SK-N-SH (cell line): ENCODE measurements at regions of chr7 and their contacts with region 1.

Region 1: DNA sequence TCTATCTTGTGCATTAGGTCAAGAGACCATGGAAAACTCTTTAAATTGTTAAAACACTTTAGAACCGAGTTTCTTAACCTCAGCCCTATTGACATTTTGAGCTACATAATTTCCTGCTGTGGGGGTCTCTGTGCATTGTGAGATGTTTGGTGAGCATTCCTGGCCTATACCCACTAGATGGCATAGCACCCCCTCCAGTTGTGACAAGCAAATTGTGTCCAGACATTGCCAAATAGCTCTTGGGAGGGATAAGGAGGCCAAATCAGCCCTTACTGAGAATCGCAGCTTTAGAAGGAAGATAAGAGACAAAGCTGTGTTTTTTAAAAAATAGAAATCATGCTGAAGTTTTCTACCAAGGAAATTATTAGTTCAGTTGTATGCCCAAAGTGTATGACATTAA is 1158.5 kb upstream of the C7orf33 start:
- DNase-seq: peak; percentile 61
- H3K4me3 ChIP-seq: no peak overlapping the region
- H3K27ac ChIP-seq: peak overlapping the region; percentile 20 to 23; a peak in 3 of 4 replicates
- H3K4me1 ChIP-seq: peaks cover 8 to 9% of the 10 kb centered on the region in 2 experiments; a peak in 3 of 4 replicates
- H3K27me3 ChIP-seq: no peaks in the 10 kb centered on the region
- CTCF ChIP-seq: peak; percentile 85
- EP300 ChIP-seq: 0 out of 4 replicates have a peak, but pooled peaks of 1 of the 2 experiments have one; percentile 11
- RAD21 ChIP-seq: peak; percentile 98

Region 2: DNA sequence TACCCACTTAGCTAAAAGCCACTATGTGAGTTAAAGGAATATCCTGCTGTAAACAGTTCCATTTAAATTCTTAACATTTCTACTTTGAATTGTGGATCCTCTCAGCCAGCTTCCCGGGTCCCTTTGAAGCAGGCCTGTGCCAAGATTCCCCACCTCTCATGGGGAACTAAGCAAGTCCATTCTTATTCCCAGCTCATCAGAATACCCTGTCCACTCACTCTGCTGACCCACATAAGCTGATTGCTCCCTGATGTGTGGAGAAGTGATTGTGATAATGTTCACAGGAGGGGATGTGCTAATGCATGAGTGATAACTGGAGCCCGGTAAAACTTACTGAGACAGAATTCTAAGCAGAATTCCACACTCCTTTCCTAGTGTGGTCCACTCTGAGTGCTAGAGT is 605.8 kb before region 1 on chr7:
- CTCF ChIA-PET with region 1: no interaction called
- POLR2A ChIA-PET with region 1: no interaction called
- DNase-seq: peak; percentile 19
- H3K4me3 ChIP-seq: no peak overlapping the region
- H3K27ac ChIP-seq: peak overlapping the region in 1 of 2 experiments; percentile 68; a peak in 2 of 4 replicates
- H3K4me1 ChIP-seq: peaks cover 0 to 36% of the 10 kb centered on the region in 2 experiments; a peak in 2 of 4 replicates
- H3K27me3 ChIP-seq: no peaks in the 10 kb centered on the region
- CTCF ChIP-seq: no peak
- EP300 ChIP-seq: peak in 1 of 2 experiments; percentile 31; a peak in 1 of 4 replicates
- RAD21 ChIP-seq: no peak; the same call in 1 of the 2 replicates

Region 3: DNA sequence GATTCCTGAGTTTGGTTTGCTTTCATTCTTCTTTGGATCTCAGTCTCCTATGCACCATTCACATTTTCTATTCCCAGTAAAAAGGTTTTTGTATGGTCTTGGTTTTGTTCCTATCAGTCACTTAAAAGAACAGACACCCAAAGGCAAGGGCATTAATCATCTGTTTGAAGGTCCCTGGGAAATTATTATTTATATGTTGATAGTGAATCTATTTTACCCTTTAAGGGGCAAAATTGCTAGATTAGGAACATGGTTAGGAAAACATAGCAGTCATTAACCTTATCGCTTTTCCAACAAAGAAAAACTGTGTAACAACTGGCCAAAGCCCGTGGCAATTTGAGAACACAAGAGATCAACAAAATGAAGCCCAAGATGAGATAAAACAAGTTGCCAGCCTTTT is 11.9 kb after region 1 on chr7:
- CTCF ChIA-PET with region 1: interaction called, 16 read pairs
- POLR2A ChIA-PET with region 1: no interaction called
- DNase-seq: peak; percentile 63
- H3K4me3 ChIP-seq: no peak overlapping the region
- H3K27ac ChIP-seq: peak overlapping the region in 1 of 2 experiments; percentile 99; a peak in 3 of 4 replicates
- H3K4me1 ChIP-seq: peaks cover 0 to 14% of the 10 kb centered on the region in 2 experiments; a peak in 2 of 4 replicates
- H3K27me3 ChIP-seq: no peaks in the 10 kb centered on the region
- CTCF ChIP-seq: no peak
- EP300 ChIP-seq: peak; percentile 39 to 100; a peak in 3 of 4 replicates
- RAD21 ChIP-seq: 0 out of 2 replicates have a peak, but pooled peaks have one; percentile 50

Region 4: GRCh38 chr7:147452816-147453215 is 20.7 kb after region 1 on chr7:
- CTCF ChIA-PET with region 1: interaction called, 10 read pairs
- POLR2A ChIA-PET with region 1: no interaction called
- DNase-seq: no peak
- H3K4me3 ChIP-seq: no peak overlapping the region
- H3K27ac ChIP-seq: no peak overlapping the region
- H3K4me1 ChIP-seq: no peaks in the 10 kb centered on the region
- H3K27me3 ChIP-seq: no peaks in the 10 kb centered on the region
- CTCF ChIP-seq: no peak
- EP300 ChIP-seq: no peak
- RAD21 ChIP-seq: no peak

Region 5: DNA sequence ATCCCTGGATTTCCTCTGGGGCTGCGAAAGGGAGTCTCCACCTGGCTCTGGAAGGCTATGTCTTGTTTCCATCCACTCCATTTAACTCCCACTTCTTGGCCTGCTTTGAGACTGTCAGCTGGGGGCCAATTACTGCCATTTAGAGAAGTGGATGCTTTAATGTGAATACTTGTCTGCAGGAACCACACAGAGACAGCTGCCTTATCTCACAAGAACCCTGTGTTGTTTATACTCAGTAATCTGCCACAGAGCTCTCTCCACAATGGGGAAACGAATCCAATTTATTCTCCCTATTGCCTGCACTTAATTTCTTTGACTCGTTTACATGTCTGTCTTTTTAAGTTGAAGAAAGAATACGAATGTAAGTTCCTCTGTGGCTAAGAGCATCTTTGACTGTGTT is 371.5 kb after region 1 on chr7:
- CTCF ChIA-PET with region 1: interaction called, 28 read pairs
- POLR2A ChIA-PET with region 1: no interaction called
- DNase-seq: peak; percentile 73
- H3K4me3 ChIP-seq: no peak overlapping the region
- H3K27ac ChIP-seq: peak overlapping the region in 1 of 2 experiments; percentile 93; a peak in 3 of 4 replicates
- H3K4me1 ChIP-seq: peaks cover 0 to 6% of the 10 kb centered on the region in 2 experiments; a peak in 2 of 4 replicates
- H3K27me3 ChIP-seq: no peaks in the 10 kb centered on the region
- CTCF ChIP-seq: no peak
- EP300 ChIP-seq: peak; percentile 3 to 79; a peak in 2 of 4 replicates
- RAD21 ChIP-seq: peak; percentile 42

Region 6: DNA sequence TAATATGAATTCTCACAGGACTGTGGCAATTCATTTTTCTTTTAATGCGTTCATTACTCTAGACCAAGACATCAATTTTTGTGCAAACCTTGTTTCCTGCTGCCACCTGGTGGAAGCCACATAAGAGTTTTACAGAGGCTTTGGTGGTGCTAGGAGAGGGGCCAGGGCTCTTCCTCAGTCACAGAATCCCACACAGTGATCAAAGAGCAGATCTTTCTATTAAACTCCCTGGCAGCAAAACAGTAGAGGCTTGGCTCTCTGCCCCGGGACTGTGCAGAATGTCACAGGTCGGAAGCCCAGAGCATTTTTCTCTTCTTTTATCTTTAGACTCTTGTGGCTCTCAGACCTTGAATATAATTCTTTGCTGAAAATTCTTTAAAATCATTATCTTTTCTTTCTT is 652.1 kb after region 1 on chr7:
- CTCF ChIA-PET with region 1: interaction called, 47 read pairs
- POLR2A ChIA-PET with region 1: no interaction called
- DNase-seq: peak; percentile 77
- H3K4me3 ChIP-seq: no peak overlapping the region
- H3K27ac ChIP-seq: peak overlapping the region; percentile 48 to 58; a peak in 3 of 4 replicates
- H3K4me1 ChIP-seq: peaks cover 9 to 14% of the 10 kb centered on the region in 2 experiments; a peak in 3 of 4 replicates
- H3K27me3 ChIP-seq: no peaks in the 10 kb centered on the region
- CTCF ChIP-seq: peak; percentile 98
- EP300 ChIP-seq: peak in 1 of 2 experiments; percentile 87; a peak in 2 of 4 replicates
- RAD21 ChIP-seq: peak; percentile 100